ENCODE measurements at regions of chr2 and their contacts with region 1.

Region 1: GRCh38 chr2:118046634-118047210 is 32.9 kb upstream of the CCDC93 start:
- DNase-seq: no peak
- H3K4me3 ChIP-seq: no peak overlapping the region
- CTCF ChIP-seq: peak; percentile 45

Region 2: GRCh38 chr2:117820444-117820843 is 226.3 kb before region 1 on chr2:
- CTCF ChIA-PET with region 1: no interaction called
- POLR2A ChIA-PET with region 1: no interaction called
- DNase-seq: no peak
- H3K4me3 ChIP-seq: no peak overlapping the region
- CTCF ChIP-seq: no peak

Region 3: GRCh38 chr2:118013724-118014491 is 32.8 kb before region 1 on chr2 and contains the start of gene CCDC93:
- CTCF ChIA-PET with region 1: interaction called, 10 read pairs
- POLR2A ChIA-PET with region 1: no interaction called
- DNase-seq: no peak
- H3K4me3 ChIP-seq: peak within 1 kb of the TSS; percentile 96
- CTCF ChIP-seq: no peak

Region 4: DNA sequence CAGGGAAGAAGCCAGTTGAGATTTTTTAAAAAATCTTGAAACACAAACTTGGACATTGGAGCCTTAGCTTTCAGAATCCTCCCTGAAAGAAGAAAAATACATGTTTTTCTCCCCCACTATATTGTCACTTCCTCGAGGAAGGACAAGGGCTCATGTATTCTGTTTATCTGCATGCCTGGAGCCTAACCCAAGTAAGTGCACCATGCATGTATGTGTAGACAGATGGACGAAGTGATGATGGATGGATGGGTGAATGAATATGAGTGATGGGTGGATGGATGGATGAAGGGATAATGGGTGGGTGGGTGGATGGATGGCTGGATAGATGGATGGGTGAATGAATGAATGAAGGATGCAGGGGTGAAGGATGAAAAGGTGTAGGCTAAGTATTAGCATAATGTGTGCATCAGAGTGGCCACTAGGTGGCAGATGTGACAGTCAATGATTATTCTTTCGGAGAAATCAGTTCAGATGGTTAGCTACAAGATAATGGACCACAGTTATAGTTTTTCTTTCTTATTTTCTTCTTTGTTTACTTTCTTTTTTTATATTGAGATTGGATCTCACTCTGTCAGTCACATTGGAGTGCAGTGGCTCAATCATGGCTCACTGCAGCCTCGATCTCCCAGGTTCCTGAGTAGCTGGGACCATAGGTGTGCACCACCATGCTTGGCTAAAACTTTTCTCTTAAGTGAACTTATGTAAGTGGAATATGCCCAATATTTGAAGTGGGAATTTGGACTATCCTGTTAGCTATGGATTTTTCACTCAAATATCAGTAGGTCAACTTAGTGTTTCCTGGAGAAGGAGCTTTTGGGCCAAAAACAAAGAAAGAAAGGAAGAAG is 14.3 kb before region 1 on chr2:
- CTCF ChIA-PET with region 1: interaction called, 45 read pairs
- POLR2A ChIA-PET with region 1: no interaction called
- DNase-seq: no peak
- H3K4me3 ChIP-seq: no peak overlapping the region
- CTCF ChIP-seq: peak; percentile 69

Region 5: DNA sequence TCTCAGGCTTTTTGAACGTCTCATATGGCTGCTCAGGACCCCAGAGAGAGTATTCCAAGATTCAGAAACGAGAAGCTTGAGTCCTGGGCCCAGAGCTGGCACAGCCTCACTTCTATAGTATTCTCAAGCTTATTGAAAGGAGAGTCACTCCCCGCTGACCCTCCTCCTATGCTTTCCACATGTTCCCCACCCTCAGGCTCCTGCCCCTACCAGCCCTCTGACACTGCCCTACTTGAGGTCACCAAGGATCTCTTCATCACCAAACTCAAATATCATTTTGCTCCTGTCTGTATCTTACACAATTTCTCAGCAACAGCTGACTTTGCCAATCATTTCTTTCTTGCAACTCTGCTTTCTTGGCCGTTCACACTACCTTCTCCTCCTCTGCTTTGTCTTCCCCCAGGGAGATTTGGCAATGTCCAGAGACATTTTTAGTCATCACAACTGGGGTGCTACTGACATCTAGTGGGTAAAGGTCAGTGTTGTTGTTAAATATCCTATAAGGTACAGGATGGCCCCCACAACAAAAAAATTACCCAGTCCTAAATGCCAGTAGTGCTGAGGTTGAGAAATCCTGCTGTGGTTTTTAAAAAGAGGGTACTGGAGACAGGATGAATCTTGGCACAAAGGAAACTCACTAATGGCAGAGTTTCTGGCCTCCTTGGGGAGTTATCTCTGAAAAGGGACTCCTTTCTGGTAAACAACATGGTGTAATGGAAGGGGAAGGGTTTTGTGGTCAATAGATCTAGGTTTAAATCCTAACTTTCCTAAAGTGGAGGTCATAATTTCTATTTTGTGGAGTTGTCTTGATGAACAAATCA is 14.6 kb after region 1 on chr2:
- CTCF ChIA-PET with region 1: interaction called, 235 read pairs
- POLR2A ChIA-PET with region 1: interaction called, 9 read pairs
- DNase-seq: no peak
- H3K4me3 ChIP-seq: no peak overlapping the region
- CTCF ChIP-seq: peak; percentile 36

Region 6: DNA sequence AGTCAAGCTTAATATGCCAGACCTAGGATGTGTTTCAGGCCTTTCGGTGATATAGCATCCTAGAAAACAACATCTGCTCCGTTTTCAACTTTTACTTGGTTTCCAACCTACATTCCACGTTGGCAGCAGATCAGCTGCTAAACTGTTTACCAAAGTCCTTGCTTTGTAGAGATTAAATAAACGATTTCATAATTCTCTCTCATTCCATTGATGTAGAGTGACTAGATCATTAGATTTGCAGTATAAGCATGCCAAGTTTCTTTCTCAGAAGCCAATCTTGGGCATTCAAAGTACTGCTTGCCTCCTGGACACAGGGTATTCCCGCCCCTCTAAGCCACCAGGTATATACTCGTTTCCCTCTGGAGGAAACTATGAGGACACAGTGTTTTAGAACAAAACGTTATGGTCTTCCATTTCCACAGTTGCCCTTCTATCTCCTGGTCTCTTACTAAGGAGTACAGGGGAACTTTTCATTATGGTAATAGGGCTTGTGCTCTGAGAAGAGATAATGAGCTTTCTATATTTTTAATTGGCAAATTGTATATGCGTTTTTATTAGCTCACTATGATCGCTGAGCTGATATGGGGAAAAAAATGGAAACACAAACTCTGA is 31.0 kb after region 1 on chr2:
- CTCF ChIA-PET with region 1: interaction called, 10 read pairs
- POLR2A ChIA-PET with region 1: no interaction called
- DNase-seq: no peak
- H3K4me3 ChIP-seq: no peak overlapping the region
- CTCF ChIP-seq: no peak

Region 7: GRCh38 chr2:118088051-118089024 is 41.6 kb after region 1 on chr2 and contains the start of gene INSIG2:
- CTCF ChIA-PET with region 1: interaction called, 13 read pairs
- POLR2A ChIA-PET with region 1: no interaction called
- DNase-seq: peak; percentile 73
- H3K4me3 ChIP-seq: peak within 1 kb of the TSS; percentile 92
- CTCF ChIP-seq: peak; percentile 8

Region 8: DNA sequence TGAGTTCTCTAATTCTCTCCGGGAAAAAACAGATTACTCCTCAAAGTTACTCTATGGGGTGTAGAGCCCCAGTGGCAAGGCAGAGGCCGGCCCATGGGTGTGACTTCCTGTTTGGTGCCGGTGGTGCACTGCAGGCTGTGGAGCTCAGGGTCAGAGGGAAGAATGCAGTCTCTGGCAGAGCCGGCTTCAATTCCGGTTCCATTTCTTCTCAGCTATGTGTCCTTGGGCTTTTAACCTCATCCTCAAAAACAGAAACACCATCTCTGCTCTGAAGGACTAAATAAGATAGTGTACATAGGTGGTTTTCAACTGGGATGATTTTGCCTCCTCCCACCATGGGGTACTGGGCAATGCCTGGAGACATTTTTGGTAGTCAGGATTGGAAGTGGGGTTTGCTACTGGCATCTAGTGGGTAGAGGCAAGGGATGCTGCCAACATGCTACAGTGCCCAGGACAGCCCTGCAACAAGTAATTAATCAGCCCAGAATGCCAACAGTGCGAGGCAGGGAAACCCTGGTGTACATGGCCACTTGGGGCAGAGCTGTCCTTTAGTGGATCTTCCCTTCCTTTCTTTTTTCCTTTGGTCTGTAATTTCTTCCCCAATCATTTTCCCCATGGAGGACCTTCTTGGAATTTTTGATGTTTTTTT is 122.8 kb after region 1 on chr2:
- CTCF ChIA-PET with region 1: no interaction called
- POLR2A ChIA-PET with region 1: no interaction called
- DNase-seq: no peak
- H3K4me3 ChIP-seq: no peak overlapping the region
- CTCF ChIP-seq: no peak

Region 9: GRCh38 chr2:118492335-118492734 is 445.6 kb after region 1 on chr2:
- CTCF ChIA-PET with region 1: no interaction called
- POLR2A ChIA-PET with region 1: no interaction called
- DNase-seq: no peak
- H3K4me3 ChIP-seq: no peak overlapping the region
- CTCF ChIP-seq: no peak

Region 10: GRCh38 chr2:118865106-118865505 is 818.4 kb after region 1 on chr2:
- CTCF ChIA-PET with region 1: interaction called, 36 read pairs
- POLR2A ChIA-PET with region 1: interaction called, 3 read pairs
- DNase-seq: no peak
- H3K4me3 ChIP-seq: no peak overlapping the region
- CTCF ChIP-seq: peak; percentile 71

Measured in AG04449 (cell line).